Left lung (tissue), 14 donors: ENCODE measurements at regions of chr4 and their contacts with region 1.

Region 1: GRCh38 chr4:117893207-117893606 is 141.1 kb upstream of the NDST3 start:
- DNase-seq: no peak
- ATAC-seq: no peak
- H3K4me3 ChIP-seq: no peak overlapping the region
- H3K27ac ChIP-seq: no peak overlapping the region
- H3K4me1 ChIP-seq: no peaks in the 10 kb centered on the region
- H3K27me3 ChIP-seq: no peaks in the 10 kb centered on the region
- CTCF ChIP-seq: no peak

Region 2: DNA sequence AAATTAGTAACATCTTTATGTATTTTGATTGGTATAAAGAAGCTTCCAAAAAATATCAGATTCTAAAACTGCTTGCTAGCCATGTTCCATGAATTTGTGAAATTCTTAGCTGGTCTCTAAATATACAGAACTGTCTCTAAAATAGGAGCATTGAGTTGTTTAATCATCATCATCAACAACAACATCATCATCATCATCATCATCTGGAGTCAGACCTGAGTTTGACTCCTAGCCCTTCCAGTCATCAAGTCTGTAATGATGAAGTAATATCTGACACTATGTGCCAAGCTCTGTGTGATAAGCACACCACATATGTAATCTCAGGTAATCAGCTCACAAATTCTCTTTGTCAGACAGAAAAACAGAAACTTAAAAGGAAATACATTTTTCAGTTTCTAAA is 991.7 kb before region 1 on chr4:
- intact Hi-C with region 1: loop called in 1 of 2 experiments (anchors 10 kb)
- DNase-seq: no peak
- ATAC-seq: no peak
- H3K4me3 ChIP-seq: no peak overlapping the region
- H3K27ac ChIP-seq: no peak overlapping the region
- H3K4me1 ChIP-seq: no peaks in the 10 kb centered on the region
- H3K27me3 ChIP-seq: no peaks in the 10 kb centered on the region
- CTCF ChIP-seq: no peak